CD14-positive monocyte (primary cell): ENCODE measurements at regions of chr2 and their contacts with region 1.

Region 1: GRCh38 chr2:182186132-182186735 is 200.6 kb downstream of the PPP1R1C start:
- DNase-seq: peak; percentile 3 to 44 (median 5)
- H3K4me3 ChIP-seq: no peak overlapping the region
- H3K4me3 Mint-ChIP-seq: no peak overlapping the region
- H3K27ac ChIP-seq: no peak overlapping the region
- H3K27ac Mint-ChIP-seq: no peak overlapping the region
- H3K4me1 ChIP-seq: no peaks in the 10 kb centered on the region
- H3K4me1 Mint-ChIP-seq: no peaks in the 10 kb centered on the region
- H3K27me3 ChIP-seq: no peaks in the 10 kb centered on the region
- H3K27me3 Mint-ChIP-seq: peaks cover 0 to 3% (median 0%) of the 10 kb centered on the region in 3 donors
- CTCF ChIP-seq: peak; percentile 84

Region 2: GRCh38 chr2:182359990-182360662 is 173.9 kb after region 1 on chr2:
- intact Hi-C with region 1: no loop called
- DNase-seq: no peak
- H3K4me3 ChIP-seq: no peak overlapping the region
- H3K4me3 Mint-ChIP-seq: no peak overlapping the region
- H3K27ac ChIP-seq: no peak overlapping the region
- H3K27ac Mint-ChIP-seq: no peak overlapping the region
- H3K4me1 ChIP-seq: no peaks in the 10 kb centered on the region
- H3K4me1 Mint-ChIP-seq: no peaks in the 10 kb centered on the region
- H3K27me3 ChIP-seq: no peaks in the 10 kb centered on the region
- H3K27me3 Mint-ChIP-seq: peaks cover 0 to 2% (median 0%) of the 10 kb centered on the region in 3 donors
- CTCF ChIP-seq: no peak

Region 3: GRCh38 chr2:182650704-182651103 is 464.5 kb after region 1 on chr2:
- intact Hi-C with region 1: loop called (anchors 5 kb)
- DNase-seq: peak in 1 of 3 donors; percentile 23
- H3K4me3 ChIP-seq: no peak overlapping the region
- H3K4me3 Mint-ChIP-seq: peak overlapping the region in 1 of 2 donors; percentile 37
- H3K27ac ChIP-seq: no peak overlapping the region
- H3K27ac Mint-ChIP-seq: no peak overlapping the region
- H3K4me1 ChIP-seq: no peaks in the 10 kb centered on the region
- H3K4me1 Mint-ChIP-seq: peaks cover 4% of the 10 kb centered on the region
- H3K27me3 ChIP-seq: no peaks in the 10 kb centered on the region
- H3K27me3 Mint-ChIP-seq: peaks cover 0 to 3% (median 0%) of the 10 kb centered on the region in 3 donors
- CTCF ChIP-seq: peak; percentile 69

Region 4: DNA sequence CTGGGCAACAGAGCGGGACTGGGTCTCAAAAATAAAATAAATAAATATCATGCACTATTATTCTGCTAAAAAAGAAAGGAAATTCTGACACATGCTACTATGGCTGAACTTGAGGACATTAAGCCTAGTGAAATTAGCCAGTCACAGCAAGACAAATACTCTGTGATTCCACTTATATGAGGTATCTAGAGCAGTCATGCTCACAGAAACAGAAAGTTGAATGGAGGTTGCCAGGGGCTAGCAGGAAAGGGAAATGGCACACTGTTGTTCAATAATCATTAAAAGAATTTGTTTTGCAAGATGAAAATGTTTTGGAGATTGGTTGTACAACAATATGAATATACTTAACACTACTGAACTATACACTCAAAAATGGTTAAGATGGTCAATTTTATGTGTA is 791.2 kb after region 1 on chr2:
- intact Hi-C with region 1: loop called (anchors 5 kb)
- DNase-seq: no peak
- H3K4me3 ChIP-seq: no peak overlapping the region
- H3K4me3 Mint-ChIP-seq: no peak overlapping the region
- H3K27ac ChIP-seq: no peak overlapping the region
- H3K27ac Mint-ChIP-seq: no peak overlapping the region
- H3K4me1 ChIP-seq: no peaks in the 10 kb centered on the region
- H3K4me1 Mint-ChIP-seq: no peaks in the 10 kb centered on the region
- H3K27me3 ChIP-seq: no peaks in the 10 kb centered on the region
- H3K27me3 Mint-ChIP-seq: peaks cover 2 to 11% (median 4%) of the 10 kb centered on the region in 3 donors
- CTCF ChIP-seq: no peak